Sigmoid colon (tissue), 7 donors: ENCODE measurements at regions of chr5 and their contacts with region 1.

Region 1: DNA sequence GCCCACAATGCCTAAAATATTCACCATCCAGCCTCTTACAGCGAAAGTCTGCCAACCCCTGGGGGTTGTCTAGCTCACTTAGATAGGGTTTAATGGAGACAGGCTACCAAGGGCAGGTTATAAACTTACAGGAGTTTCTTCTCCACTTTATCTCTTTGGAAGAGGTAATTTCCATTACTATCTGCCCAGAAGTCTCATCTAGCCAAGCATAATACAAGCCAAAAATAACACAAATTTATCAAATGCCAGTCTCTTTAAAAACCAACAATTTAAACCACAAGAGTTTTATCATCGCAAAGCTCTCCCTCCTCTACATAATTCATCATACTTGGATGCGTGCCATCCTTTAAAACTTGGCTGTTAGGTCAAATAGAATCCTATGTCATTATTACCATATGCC is 6.2 kb downstream of the RBM22 start:
- DNase-seq: no peak
- H3K4me3 ChIP-seq: no peak overlapping the region
- H3K27ac ChIP-seq: no peak overlapping the region
- H3K4me1 ChIP-seq: peaks cover 0 to 11% (median 8%) of the 10 kb centered on the region in 4 donors
- H3K27me3 ChIP-seq: no peaks in the 10 kb centered on the region
- CTCF ChIP-seq: no peak
- EP300 ChIP-seq: no peak
- POLR2A ChIP-seq: no peak

Region 2: GRCh38 chr5:150560401-150561193 is 134.0 kb before region 1 on chr5:
- intact Hi-C with region 1: loop called (anchors 5 kb)
- DNase-seq: peak; percentile 93
- H3K4me3 ChIP-seq: no peak overlapping the region
- H3K27ac ChIP-seq: no peak overlapping the region
- H3K4me1 ChIP-seq: peaks cover 0 to 13% (median 3%) of the 10 kb centered on the region in 4 donors
- H3K27me3 ChIP-seq: no peaks in the 10 kb centered on the region
- CTCF ChIP-seq: peak; percentile 87 to 96 (median 89)
- EP300 ChIP-seq: no peak
- POLR2A ChIP-seq: no peak